CD8-positive, alpha-beta T cell (primary cell): ENCODE measurements at regions of chr5 and their contacts with region 1.

Region 1: GRCh38 chr5:69334793-69335268 is 2.2 kb upstream of the CCDC125 start:
- DNase-seq: peak; percentile 48 to 83 (median 74)
- ATAC-seq: peak; percentile 71
- H3K4me3 ChIP-seq: no peak overlapping the region
- H3K4me3 Mint-ChIP-seq: no peak overlapping the region
- H3K27ac ChIP-seq: no peak overlapping the region
- H3K27ac Mint-ChIP-seq: peak overlapping the region; percentile 35
- H3K4me1 ChIP-seq: peaks cover 22% of the 10 kb centered on the region
- H3K4me1 Mint-ChIP-seq: peaks cover 23% of the 10 kb centered on the region
- H3K27me3 ChIP-seq: no peaks in the 10 kb centered on the region
- H3K27me3 Mint-ChIP-seq: no peaks in the 10 kb centered on the region
- CTCF ChIP-seq: peak; percentile 72

Region 2: DNA sequence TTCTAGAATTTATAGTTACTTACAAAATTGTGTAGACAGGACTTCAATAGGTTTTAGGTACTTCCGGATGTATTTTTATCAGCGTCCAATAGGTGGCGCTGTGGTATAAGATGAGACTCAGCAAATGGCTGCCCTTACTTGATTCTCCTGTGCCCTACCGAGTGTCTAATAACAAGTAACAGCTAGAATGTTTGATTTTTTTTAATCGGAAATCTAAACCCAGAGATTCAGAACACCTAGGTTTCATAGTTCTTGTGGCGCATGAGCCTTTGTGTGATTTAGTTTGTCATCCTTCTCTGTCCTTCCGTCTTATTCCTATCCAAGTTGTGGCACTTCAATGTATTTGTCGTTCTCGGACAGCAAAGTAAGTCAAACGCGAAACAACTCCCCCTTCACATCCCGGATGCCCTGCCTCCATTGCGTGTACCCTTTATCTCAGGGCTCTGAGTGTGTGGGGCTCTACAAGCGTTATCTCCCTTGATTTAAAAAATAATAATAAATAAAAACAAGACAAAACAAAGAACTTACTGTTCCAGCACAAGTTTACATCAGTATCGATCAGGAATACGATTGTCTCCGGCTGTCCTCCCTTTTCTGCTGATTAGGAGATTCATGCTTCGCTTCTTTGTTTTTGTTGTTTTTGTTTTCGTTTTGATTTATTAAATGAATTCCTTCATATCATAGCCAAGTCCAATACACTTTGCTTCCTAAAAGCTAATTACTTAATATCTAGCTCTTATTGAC is 291.7 kb before region 1 on chr5:
- CTCF ChIA-PET with region 1: interaction called, 8 read pairs
- POLR2A ChIA-PET with region 1: interaction called, 3 read pairs
- intact Hi-C with region 1: loop called (anchors 1 to 2 kb)
- DNase-seq: peak; percentile 50 to 95 (median 78)
- ATAC-seq: peak; percentile 97
- H3K4me3 ChIP-seq: peak overlapping the region; percentile 54 to 64
- H3K4me3 Mint-ChIP-seq: peak overlapping the region; percentile 89
- H3K27ac ChIP-seq: peak overlapping the region; percentile 69 to 81
- H3K27ac Mint-ChIP-seq: peak overlapping the region; percentile 95
- H3K4me1 ChIP-seq: peaks cover 3% of the 10 kb centered on the region
- H3K4me1 Mint-ChIP-seq: peaks cover 11% of the 10 kb centered on the region
- H3K27me3 ChIP-seq: no peaks in the 10 kb centered on the region
- H3K27me3 Mint-ChIP-seq: no peaks in the 10 kb centered on the region
- CTCF ChIP-seq: peak; percentile 88

Region 3: DNA sequence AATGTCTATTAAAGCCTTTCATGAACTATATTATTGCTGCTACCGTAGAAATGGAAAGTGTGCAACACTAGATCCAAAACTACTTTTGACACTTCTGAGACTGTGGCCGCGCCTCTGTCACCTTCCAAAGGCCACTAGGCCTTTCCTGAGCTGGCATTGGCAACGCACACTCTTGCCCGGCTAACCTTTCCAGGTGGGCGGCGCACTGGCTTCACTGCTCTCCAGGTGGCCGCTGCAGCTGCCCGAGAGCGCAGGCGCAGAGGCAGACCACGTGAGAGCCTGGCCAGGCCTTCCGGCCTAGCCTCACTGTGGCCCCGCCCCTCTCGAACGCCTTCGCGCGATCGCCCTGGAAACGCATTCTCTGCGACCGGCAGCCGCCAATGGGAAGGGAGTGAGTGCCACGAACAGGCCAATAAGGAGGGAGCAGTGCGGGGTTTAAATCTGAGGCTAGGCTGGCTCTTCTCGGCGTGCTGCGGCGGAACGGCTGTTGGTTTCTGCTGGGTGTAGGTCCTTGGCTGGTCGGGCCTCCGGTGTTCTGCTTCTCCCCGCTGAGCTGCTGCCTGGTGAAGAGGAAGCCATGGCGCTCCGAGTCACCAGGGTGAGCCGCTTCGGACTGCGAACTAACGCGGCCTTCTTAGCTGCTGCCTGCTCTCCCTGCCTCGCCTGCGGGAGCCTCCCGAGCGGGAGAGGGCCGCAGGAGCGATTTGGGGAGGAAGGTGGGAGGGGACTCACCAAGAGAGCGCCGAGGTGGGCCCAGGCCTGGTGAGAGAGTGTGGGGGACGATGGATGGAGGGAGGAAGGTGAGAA is 167.9 kb before region 1 on chr5 and contains the start of gene CCNB1:
- CTCF ChIA-PET with region 1: no interaction called
- POLR2A ChIA-PET with region 1: no interaction called
- intact Hi-C with region 1: loop called (anchors 1 kb)
- DNase-seq: peak; percentile 93 to 98 (median 96)
- ATAC-seq: peak; percentile 100
- H3K4me3 ChIP-seq: peak within 1 kb of the TSS; percentile 84 to 87
- H3K4me3 Mint-ChIP-seq: peak within 1 kb of the TSS; percentile 94
- H3K27ac ChIP-seq: peak within 1 kb of the TSS; percentile 50 to 61
- H3K27ac Mint-ChIP-seq: peak within 1 kb of the TSS; percentile 84
- H3K4me1 ChIP-seq: peaks cover 9% of the 10 kb centered on the region
- H3K4me1 Mint-ChIP-seq: peaks cover 27% of the 10 kb centered on the region
- H3K27me3 ChIP-seq: no peaks in the 10 kb centered on the region
- H3K27me3 Mint-ChIP-seq: no peaks in the 10 kb centered on the region
- CTCF ChIP-seq: no peak
- total RNA-seq, gene CCNB1: 0.75 to 0.95 TPM

Region 4: GRCh38 chr5:69217548-69218526 is 117.0 kb before region 1 on chr5:
- CTCF ChIA-PET with region 1: no interaction called
- POLR2A ChIA-PET with region 1: no interaction called
- intact Hi-C with region 1: loop called in 1 of 2 experiments (anchors 1 kb)
- DNase-seq: peak; percentile 90 to 97 (median 94)
- ATAC-seq: peak; percentile 92
- H3K4me3 ChIP-seq: peak overlapping the region; percentile 85 to 97
- H3K4me3 Mint-ChIP-seq: peak overlapping the region; percentile 100
- H3K27ac ChIP-seq: peak overlapping the region; percentile 91 to 95
- H3K27ac Mint-ChIP-seq: peak overlapping the region; percentile 99
- H3K4me1 ChIP-seq: peaks cover 15% of the 10 kb centered on the region
- H3K4me1 Mint-ChIP-seq: peaks cover 28% of the 10 kb centered on the region
- H3K27me3 ChIP-seq: no peaks in the 10 kb centered on the region
- H3K27me3 Mint-ChIP-seq: no peaks in the 10 kb centered on the region
- CTCF ChIP-seq: no peak

Region 5: GRCh38 chr5:69271376-69271775 is 63.5 kb before region 1 on chr5:
- CTCF ChIA-PET with region 1: no interaction called
- POLR2A ChIA-PET with region 1: no interaction called
- intact Hi-C with region 1: no loop called
- DNase-seq: peak in 1 of 9 experiments; percentile 7
- ATAC-seq: no peak
- H3K4me3 ChIP-seq: no peak overlapping the region
- H3K4me3 Mint-ChIP-seq: no peak overlapping the region
- H3K27ac ChIP-seq: no peak overlapping the region
- H3K27ac Mint-ChIP-seq: no peak overlapping the region
- H3K4me1 ChIP-seq: no peaks in the 10 kb centered on the region
- H3K4me1 Mint-ChIP-seq: peaks cover 10% of the 10 kb centered on the region
- H3K27me3 ChIP-seq: no peaks in the 10 kb centered on the region
- H3K27me3 Mint-ChIP-seq: no peaks in the 10 kb centered on the region
- CTCF ChIP-seq: no peak

Region 6: GRCh38 chr5:69285448-69286116 is 49.2 kb before region 1 on chr5:
- CTCF ChIA-PET with region 1: no interaction called
- POLR2A ChIA-PET with region 1: no interaction called
- intact Hi-C with region 1: loop called in 1 of 2 experiments (anchors 5 kb)
- DNase-seq: no peak
- ATAC-seq: no peak
- H3K4me3 ChIP-seq: no peak overlapping the region
- H3K4me3 Mint-ChIP-seq: no peak overlapping the region
- H3K27ac ChIP-seq: no peak overlapping the region
- H3K27ac Mint-ChIP-seq: no peak overlapping the region
- H3K4me1 ChIP-seq: no peaks in the 10 kb centered on the region
- H3K4me1 Mint-ChIP-seq: no peaks in the 10 kb centered on the region
- H3K27me3 ChIP-seq: no peaks in the 10 kb centered on the region
- H3K27me3 Mint-ChIP-seq: no peaks in the 10 kb centered on the region
- CTCF ChIP-seq: no peak

Region 7: DNA sequence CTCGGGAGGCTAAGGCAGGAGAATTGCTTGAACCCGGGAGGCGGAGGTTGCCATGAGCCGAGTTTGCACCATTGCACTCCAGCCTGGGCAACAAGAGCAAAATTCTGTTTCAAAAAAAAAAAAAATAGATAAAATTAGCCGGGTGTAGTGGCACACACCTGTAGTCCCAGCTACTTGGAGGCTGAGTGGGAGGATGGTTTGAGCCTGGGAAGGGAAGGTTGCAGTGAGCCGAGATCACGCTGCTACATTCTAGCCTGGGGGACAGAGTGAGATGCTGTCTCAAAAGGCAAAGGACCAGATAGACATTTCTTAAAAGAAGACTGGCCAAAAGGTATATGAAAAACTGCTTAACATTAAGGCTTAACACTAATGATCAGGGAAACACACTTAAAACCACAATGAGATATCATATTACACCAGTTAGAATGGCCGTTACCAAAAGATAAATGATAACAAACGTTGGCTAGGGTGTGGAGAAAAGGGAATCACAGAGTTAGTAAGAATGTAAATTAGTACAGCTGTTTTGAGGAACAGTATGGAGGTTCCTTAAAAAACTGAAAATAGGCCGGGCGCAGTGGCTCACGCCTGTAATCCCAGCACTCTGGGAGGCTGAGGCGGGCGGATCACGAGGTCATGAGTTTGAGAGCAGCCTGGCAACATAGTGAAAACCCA is 70.0 kb after region 1 on chr5:
- CTCF ChIA-PET with region 1: no interaction called
- POLR2A ChIA-PET with region 1: no interaction called
- intact Hi-C with region 1: no loop called
- DNase-seq: no peak
- ATAC-seq: no peak
- H3K4me3 ChIP-seq: no peak overlapping the region
- H3K4me3 Mint-ChIP-seq: no peak overlapping the region
- H3K27ac ChIP-seq: no peak overlapping the region
- H3K27ac Mint-ChIP-seq: no peak overlapping the region
- H3K4me1 ChIP-seq: no peaks in the 10 kb centered on the region
- H3K4me1 Mint-ChIP-seq: no peaks in the 10 kb centered on the region
- H3K27me3 ChIP-seq: no peaks in the 10 kb centered on the region
- H3K27me3 Mint-ChIP-seq: no peaks in the 10 kb centered on the region
- CTCF ChIP-seq: no peak